ENCODE measurements at regions of chr3 and their contacts with region 1.

Region 1: DNA sequence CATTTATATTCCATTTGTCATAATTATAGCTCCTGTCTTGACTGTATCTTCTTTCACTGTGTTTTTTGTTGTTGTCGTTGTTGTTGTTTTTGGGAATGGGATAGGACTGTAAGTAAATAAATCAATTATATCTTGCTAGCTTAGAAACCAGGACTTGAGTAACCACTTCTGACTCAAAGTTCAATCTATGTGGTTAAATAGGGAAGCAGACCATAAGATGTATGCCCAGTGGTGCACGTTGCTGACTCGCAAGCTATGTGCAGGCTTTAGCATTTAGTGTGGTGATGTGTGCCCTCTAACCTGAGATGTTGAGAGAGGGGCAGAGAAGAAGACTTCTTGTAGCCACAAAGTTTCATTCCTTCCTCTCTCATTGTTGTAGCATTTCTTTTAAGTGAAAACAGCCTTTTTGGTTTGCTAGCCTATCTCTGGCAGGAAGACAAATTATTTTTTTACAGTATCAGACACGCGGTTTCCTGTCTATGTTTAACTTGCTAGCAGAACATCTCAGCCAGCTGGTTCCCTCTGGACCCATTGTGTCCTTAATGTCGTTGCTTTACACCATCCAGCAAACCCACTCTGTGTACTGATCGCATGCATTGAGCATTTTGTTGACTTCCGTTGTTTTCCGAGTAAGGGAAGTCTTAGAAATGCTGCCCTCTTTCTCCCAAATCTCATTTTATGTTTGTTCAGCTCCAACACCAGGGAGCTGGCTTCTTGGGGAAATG is 52.1 kb downstream of the TGFBR2 start:
- DNase-seq: peak; percentile 39
- H3K4me3 Mint-ChIP-seq: peak overlapping the region; percentile 76
- H3K27ac Mint-ChIP-seq: peak overlapping the region; percentile 92
- H3K4me1 Mint-ChIP-seq: peaks cover 90% of the 10 kb centered on the region
- H3K27me3 Mint-ChIP-seq: no peaks in the 10 kb centered on the region

Region 2: GRCh38 chr3:30606301-30607031 is 52.0 kb before region 1 on chr3 and contains the start of gene TGFBR2:
- intact Hi-C with region 1: loop called (anchors 2 kb)
- DNase-seq: peak; percentile 75
- H3K4me3 Mint-ChIP-seq: peak within 1 kb of the TSS; percentile 94
- H3K27ac Mint-ChIP-seq: peak within 1 kb of the TSS; percentile 97
- H3K4me1 Mint-ChIP-seq: peaks cover 63% of the 10 kb centered on the region
- H3K27me3 Mint-ChIP-seq: no peaks in the 10 kb centered on the region
- total RNA-seq, gene TGFBR2: 19.5 and 19.8 TPM in 2 replicates

Region 3: GRCh38 chr3:30644593-30645012 is 13.9 kb before region 1 on chr3:
- intact Hi-C with region 1: loop called (anchors 1 kb)
- DNase-seq: no peak
- H3K4me3 Mint-ChIP-seq: peak overlapping the region; percentile 64
- H3K27ac Mint-ChIP-seq: peak overlapping the region; percentile 95
- H3K4me1 Mint-ChIP-seq: peaks cover 88% of the 10 kb centered on the region
- H3K27me3 Mint-ChIP-seq: no peaks in the 10 kb centered on the region

Region 4: GRCh38 chr3:30681643-30682211 is 23.2 kb after region 1 on chr3:
- intact Hi-C with region 1: loop called (anchors 2 kb)
- DNase-seq: no peak
- H3K4me3 Mint-ChIP-seq: peak overlapping the region; percentile 1
- H3K27ac Mint-ChIP-seq: peak overlapping the region; percentile 36
- H3K4me1 Mint-ChIP-seq: peaks cover 74% of the 10 kb centered on the region
- H3K27me3 Mint-ChIP-seq: no peaks in the 10 kb centered on the region

Region 5: DNA sequence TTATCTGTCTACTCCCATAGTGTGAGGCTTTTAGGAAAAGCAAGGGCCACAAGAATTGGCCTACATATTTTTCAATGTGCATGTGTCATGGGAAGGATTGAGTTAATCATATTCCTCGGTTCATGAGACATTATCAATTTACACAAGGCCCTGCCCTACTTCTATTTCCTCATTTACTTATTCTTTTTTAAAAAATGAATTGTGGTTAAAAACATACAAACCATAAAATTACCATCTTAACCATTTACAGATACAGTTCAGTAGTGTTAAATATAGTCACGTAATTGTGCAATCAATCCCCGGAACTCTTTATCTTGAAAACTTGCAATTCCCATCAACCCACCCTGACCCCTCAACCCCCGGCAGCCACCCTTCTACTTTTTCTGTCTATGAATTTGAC is 520.0 kb after region 1 on chr3:
- intact Hi-C with region 1: no loop called
- DNase-seq: no peak
- H3K4me3 Mint-ChIP-seq: no peak overlapping the region
- H3K27ac Mint-ChIP-seq: no peak overlapping the region
- H3K4me1 Mint-ChIP-seq: no peaks in the 10 kb centered on the region
- H3K27me3 Mint-ChIP-seq: peaks cover 2% of the 10 kb centered on the region

Region 6: DNA sequence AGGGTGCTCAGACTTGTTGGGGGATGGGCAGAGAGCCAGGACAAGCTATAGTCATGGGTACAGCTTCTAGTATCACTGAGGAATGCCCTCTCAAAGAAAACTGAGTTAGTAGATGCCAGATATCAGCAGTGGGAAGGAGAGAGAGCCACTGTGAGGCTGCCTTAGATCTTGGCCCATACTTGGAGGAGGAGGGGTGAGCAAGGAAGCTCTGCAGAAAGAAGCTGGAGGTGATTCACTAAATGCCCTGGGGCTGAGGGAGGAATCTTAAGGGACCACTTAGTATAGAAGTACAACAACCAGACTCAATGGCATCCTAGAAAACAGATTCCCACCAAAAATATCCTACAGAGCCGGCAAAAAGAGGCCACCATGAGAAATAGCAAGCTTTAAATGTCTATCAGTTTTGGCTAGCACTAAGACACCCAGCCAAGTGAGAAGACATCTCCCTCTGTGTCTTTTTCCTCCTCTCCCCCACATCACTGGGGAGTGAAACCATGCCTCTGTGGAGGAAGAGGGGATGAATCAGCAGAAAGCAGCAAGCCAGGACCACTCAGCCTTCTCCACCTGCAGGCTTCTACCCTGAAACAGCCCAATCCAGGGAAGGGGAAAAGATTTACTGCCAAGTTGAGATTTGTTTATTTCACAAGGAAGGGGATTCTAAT is 591.8 kb after region 1 on chr3:
- intact Hi-C with region 1: loop called (anchors 10 kb)
- DNase-seq: no peak
- H3K4me3 Mint-ChIP-seq: no peak overlapping the region
- H3K27ac Mint-ChIP-seq: peak overlapping the region; percentile 5
- H3K4me1 Mint-ChIP-seq: peaks cover 57% of the 10 kb centered on the region
- H3K27me3 Mint-ChIP-seq: peaks cover under 1% of the 10 kb centered on the region